Activated B cell treated with CpG ODN at 0.5 μM for 24 hours (primary cell): ENCODE measurements at regions of chr5 and their contacts with region 1.

Region 1: DNA sequence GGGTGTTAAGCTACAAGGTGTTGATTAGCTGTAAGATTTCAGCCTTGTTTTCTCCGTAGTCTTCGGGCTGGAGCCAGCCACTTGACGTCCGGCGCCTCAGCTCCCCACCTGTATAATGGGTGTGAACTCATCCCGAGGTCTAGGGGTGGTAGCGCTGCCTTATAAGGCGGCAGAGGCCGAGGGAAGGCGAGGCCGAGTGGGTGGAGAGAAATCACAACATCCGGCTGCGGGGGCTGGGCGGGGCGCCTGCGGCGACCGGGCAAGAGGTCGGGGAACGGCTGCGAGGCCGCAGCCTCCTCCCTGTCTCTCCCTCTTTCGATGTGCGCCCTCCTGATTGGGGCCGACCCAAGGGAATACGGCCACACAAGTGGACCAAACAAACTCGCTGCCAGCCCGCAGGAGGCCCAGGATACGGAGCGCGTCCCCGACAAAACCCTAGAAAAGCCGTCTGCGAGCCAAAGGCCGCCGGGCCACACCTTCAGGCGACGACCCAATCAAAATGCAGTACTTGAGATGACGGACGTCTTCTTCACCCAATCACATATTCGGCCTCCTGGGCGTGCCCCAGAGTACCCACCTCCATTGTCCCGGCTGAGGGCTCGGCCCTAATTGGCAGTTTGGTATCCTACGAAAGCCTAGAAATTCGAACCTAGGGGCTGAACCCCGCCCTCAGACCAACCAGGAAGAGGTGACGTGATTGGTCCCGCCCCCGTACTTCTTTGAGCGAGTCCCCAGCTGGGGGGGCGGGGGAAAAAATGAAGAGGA is 493 bp upstream of the GRK6 start:
- DNase-seq: peak; percentile 91
- ATAC-seq: peak; percentile 85
- H3K4me3 Mint-ChIP-seq: peak overlapping the region; percentile 91
- H3K27ac Mint-ChIP-seq: peak overlapping the region; percentile 93
- H3K4me1 Mint-ChIP-seq: peaks cover 53% of the 10 kb centered on the region
- H3K27me3 Mint-ChIP-seq: no peaks in the 10 kb centered on the region
- CTCF ChIP-seq: no peak

Region 2: DNA sequence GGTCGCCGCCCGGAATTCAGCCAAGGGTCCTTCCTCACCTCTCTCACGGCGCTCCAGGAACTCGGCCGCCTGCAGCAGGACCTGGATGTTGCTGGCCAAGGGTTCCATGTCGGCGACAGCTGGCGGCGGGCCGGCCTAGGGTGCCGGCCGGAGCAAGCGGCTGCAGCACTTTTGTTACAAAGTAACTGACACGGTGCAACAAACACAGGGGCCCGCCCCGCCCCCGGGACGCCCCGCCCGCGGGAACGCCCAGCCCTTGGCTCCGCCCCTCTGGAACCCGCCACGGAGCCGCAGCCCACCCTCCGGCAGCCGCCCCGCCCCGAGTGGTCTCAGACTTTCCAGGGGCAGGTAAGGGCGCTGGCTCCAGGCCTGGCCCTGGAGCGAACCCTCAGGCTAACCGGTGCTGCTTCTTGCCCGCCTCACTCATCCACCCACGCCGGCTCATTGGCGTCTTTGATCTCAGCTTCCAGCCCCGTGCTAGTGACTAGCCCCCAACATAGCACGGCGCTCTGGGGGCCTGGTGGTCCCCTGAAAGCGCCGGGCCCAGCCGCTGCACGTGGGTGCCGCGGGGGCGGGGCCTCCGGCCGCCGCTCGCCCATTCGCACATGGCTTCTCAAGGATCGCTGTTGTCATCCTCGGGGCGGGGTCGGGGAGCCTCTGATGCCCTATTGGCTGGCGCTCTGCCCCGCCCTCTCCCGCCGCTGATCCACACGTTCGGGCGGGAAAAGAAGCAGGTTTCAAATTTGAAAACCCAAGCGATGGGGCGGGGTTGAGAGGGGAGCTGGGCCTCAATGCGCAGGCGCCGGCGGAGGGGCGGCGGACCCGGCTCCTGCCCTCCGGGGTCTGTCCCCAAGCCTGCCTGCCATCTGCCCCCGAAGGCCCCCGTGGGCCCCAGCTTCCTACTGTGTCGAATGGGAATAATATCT is 114.0 kb before region 1 on chr5 and contains the start of gene MXD3:
- CTCF ChIA-PET with region 1: no interaction called
- POLR2A ChIA-PET with region 1: interaction called, 4 read pairs
- intact Hi-C with region 1: loop called (anchors 1 kb)
- DNase-seq: peak; percentile 89
- ATAC-seq: peak; percentile 90
- H3K4me3 Mint-ChIP-seq: peak within 1 kb of the TSS; percentile 80
- H3K27ac Mint-ChIP-seq: peak within 1 kb of the TSS; percentile 47
- H3K4me1 Mint-ChIP-seq: peaks cover 38% of the 10 kb centered on the region
- H3K27me3 Mint-ChIP-seq: no peaks in the 10 kb centered on the region
- CTCF ChIP-seq: no peak
- total RNA-seq, gene MXD3: 7.6 and 9.1 TPM in 2 replicates

Region 3: GRCh38 chr5:177357459-177358351 is 68.3 kb before region 1 on chr5 and contains the start of gene RGS14:
- CTCF ChIA-PET with region 1: no interaction called
- POLR2A ChIA-PET with region 1: interaction called, 3 read pairs
- intact Hi-C with region 1: loop called (anchors 2 kb)
- DNase-seq: peak; percentile 71
- ATAC-seq: peak; percentile 89
- H3K4me3 Mint-ChIP-seq: peak within 1 kb of the TSS; percentile 85
- H3K27ac Mint-ChIP-seq: peak within 1 kb of the TSS; percentile 92
- H3K4me1 Mint-ChIP-seq: peaks cover 72% of the 10 kb centered on the region
- H3K27me3 Mint-ChIP-seq: no peaks in the 10 kb centered on the region
- CTCF ChIP-seq: no peak
- total RNA-seq, gene RGS14: 50.6 and 58.3 TPM in 2 replicates

Region 4: GRCh38 chr5:177382423-177383029 is 43.5 kb before region 1 on chr5:
- CTCF ChIA-PET with region 1: no interaction called
- POLR2A ChIA-PET with region 1: no interaction called
- intact Hi-C with region 1: no loop called
- DNase-seq: no peak
- ATAC-seq: no peak
- H3K4me3 Mint-ChIP-seq: no peak overlapping the region
- H3K27ac Mint-ChIP-seq: no peak overlapping the region
- H3K4me1 Mint-ChIP-seq: peaks cover 3% of the 10 kb centered on the region
- H3K27me3 Mint-ChIP-seq: peaks cover 11% of the 10 kb centered on the region
- CTCF ChIP-seq: no peak

Region 5: GRCh38 chr5:177440211-177440971 is 14.4 kb after region 1 on chr5:
- CTCF ChIA-PET with region 1: interaction called, 29 read pairs
- POLR2A ChIA-PET with region 1: interaction called, 296 read pairs
- intact Hi-C with region 1: no loop called
- DNase-seq: no peak
- ATAC-seq: peak; percentile 10
- H3K4me3 Mint-ChIP-seq: no peak overlapping the region
- H3K27ac Mint-ChIP-seq: peak overlapping the region; percentile 50
- H3K4me1 Mint-ChIP-seq: peaks cover 26% of the 10 kb centered on the region
- H3K27me3 Mint-ChIP-seq: no peaks in the 10 kb centered on the region
- CTCF ChIP-seq: no peak

Region 6: DNA sequence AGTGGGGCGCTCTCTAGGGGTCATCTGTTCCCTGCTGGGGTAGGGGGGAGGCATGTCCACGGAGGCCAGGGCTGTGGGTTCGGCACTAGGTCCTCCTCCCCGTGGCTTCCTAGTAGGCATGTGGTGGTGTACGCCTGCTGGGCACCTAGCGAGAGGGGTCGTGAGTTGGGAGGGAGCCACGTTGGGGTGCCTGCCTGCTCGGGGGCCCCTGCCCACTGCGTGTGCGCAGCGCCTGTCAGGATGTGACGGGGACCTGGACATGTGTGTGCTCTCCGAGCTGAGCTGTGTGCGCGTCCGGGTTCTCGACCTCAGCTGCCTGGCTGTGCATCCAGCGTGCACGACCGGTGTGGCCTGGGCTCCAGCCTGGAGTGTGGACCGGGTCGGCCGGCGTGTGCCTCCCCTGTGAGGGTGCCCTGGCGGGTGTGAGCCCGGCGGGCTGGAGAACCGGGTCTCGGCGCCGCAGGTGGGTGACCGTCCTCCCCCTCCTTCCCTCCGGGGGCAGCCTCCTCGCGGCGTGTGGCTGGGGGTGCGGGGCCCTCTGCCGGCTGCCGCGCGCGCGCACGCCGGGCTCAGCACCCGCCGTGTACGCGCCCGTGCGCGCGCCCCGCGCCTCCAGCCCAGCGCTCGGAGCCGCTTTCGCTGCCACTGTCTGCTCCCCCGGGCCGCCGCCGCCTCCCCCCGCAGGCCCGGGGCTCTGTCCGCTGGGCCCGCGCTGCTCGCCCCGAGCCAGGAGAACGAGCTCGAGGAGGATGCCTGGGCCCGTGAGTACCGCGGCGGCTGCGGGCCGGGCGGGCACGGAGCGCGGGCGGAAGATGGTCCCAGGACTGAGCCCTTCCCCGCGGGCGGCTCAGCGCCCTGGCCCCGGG is 20.4 kb after region 1 on chr5 and contains the start of gene PRR7:
- CTCF ChIA-PET with region 1: interaction called, 29 read pairs
- POLR2A ChIA-PET with region 1: interaction called, 296 read pairs
- intact Hi-C with region 1: loop called (anchors 1 kb)
- DNase-seq: peak; percentile 77
- ATAC-seq: peak; percentile 64
- H3K4me3 Mint-ChIP-seq: peak within 1 kb of the TSS; percentile 75
- H3K27ac Mint-ChIP-seq: peak within 1 kb of the TSS; percentile 86
- H3K4me1 Mint-ChIP-seq: peaks cover 41% of the 10 kb centered on the region
- H3K27me3 Mint-ChIP-seq: no peaks in the 10 kb centered on the region
- CTCF ChIP-seq: no peak
- total RNA-seq, gene PRR7: 2.4 and 3.2 TPM in 2 replicates

Region 7: DNA sequence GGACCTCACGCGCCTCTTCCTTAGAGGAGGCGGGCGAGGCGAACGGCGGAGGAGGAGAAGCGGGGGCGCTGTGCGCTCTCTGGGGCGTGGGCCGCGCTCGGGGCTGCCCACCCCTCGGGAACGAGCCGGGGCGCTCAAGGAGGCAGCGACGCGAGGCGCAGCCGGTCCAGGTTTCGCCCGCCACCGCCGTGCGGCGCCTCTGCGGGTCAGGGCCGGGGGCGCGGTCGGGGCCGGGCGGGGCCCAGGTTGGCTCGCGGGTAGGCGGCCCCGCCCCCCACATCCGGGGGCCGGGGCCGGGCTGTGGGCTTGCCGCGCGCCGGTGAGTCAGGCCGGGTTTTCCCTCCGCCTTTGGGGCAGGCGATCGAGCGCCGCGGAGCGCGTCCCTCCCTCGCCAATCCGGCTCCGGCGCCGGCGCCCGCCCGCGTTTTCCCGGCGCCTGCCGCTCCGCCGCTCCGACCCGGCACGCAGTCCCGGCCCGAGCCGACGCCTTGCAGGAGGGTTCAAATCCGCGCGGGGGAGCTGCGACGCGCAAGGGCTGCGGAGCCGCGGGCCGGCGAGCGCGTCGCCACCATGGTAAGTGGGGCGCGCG is 687.3 kb after region 1 on chr5 and contains the start of gene N4BP3:
- CTCF ChIA-PET with region 1: no interaction called
- POLR2A ChIA-PET with region 1: no interaction called
- intact Hi-C with region 1: loop called (anchors 1 kb)
- DNase-seq: peak; percentile 92
- ATAC-seq: peak; percentile 70
- H3K4me3 Mint-ChIP-seq: peak within 1 kb of the TSS; percentile 98
- H3K27ac Mint-ChIP-seq: peak within 1 kb of the TSS; percentile 94
- H3K4me1 Mint-ChIP-seq: peaks cover 65% of the 10 kb centered on the region
- H3K27me3 Mint-ChIP-seq: no peaks in the 10 kb centered on the region
- CTCF ChIP-seq: no peak
- total RNA-seq, gene N4BP3: 17.4 and 18.1 TPM in 2 replicates